CD4-positive, alpha-beta T cell (primary cell): ENCODE measurements at regions of chr22 and their contacts with region 1.

Region 1: DNA sequence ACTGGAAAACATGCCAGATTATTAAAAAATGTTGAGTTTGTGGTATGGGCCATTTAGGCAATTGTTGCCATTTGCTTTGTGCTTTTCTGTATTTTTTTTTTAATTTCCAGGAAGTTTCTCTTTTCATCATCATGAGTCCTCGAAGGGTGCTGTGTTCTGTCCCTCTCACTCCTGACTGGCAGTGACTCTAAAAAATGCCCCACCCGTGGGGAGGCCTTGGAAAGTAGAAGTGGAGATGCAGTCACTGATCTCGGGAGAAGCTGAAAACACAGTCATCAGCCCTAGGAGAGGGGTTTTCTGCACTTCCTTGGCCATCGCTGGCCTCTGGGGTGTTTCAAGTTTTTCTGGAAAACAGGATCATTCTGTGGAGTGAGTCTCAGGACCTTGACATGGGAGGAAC is 98.5 kb upstream of the GRK3 start:
- DNase-seq: no peak
- ATAC-seq: no peak
- H3K4me3 ChIP-seq: no peak overlapping the region
- H3K4me3 Mint-ChIP-seq: no peak overlapping the region
- H3K27ac ChIP-seq: no peak overlapping the region
- H3K27ac Mint-ChIP-seq: no peak overlapping the region
- H3K4me1 ChIP-seq: peaks cover 5% of the 10 kb centered on the region
- H3K4me1 Mint-ChIP-seq: peaks cover 5% of the 10 kb centered on the region
- H3K27me3 ChIP-seq: no peaks in the 10 kb centered on the region
- H3K27me3 Mint-ChIP-seq: no peaks in the 10 kb centered on the region
- CTCF ChIP-seq: no peak

Region 2: DNA sequence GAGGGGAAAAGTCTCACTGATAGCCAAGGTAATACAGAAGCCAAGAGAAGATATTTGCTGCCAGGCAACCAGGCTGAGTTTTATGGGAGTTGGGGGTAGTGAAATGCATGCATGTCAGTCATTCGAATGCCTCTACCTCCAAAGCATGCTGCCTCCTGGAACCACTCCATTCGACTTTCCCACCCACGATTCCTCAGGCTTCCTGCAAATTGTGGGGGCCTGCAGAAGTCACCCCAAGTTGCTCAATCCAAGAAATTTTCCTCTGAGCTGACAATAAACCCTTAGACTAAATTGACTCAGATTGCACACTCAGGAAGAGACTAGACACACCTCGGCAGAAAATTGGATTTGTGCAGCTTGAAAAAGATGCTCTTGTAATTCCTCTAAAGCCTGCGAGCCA is 24.9 kb after region 1 on chr22:
- CTCF ChIA-PET with region 1: no interaction called
- POLR2A ChIA-PET with region 1: no interaction called
- intact Hi-C with region 1: no loop called
- DNase-seq: no peak
- ATAC-seq: no peak
- H3K4me3 ChIP-seq: no peak overlapping the region
- H3K4me3 Mint-ChIP-seq: no peak overlapping the region
- H3K27ac ChIP-seq: no peak overlapping the region
- H3K27ac Mint-ChIP-seq: no peak overlapping the region
- H3K4me1 ChIP-seq: no peaks in the 10 kb centered on the region
- H3K4me1 Mint-ChIP-seq: no peaks in the 10 kb centered on the region
- H3K27me3 ChIP-seq: no peaks in the 10 kb centered on the region
- H3K27me3 Mint-ChIP-seq: peaks cover 17% of the 10 kb centered on the region
- CTCF ChIP-seq: no peak

Region 3: GRCh38 chr22:25656724-25657123 is 190.8 kb after region 1 on chr22:
- CTCF ChIA-PET with region 1: no interaction called
- POLR2A ChIA-PET with region 1: no interaction called
- intact Hi-C with region 1: no loop called
- DNase-seq: no peak
- ATAC-seq: no peak
- H3K4me3 ChIP-seq: no peak overlapping the region
- H3K4me3 Mint-ChIP-seq: no peak overlapping the region
- H3K27ac ChIP-seq: no peak overlapping the region
- H3K27ac Mint-ChIP-seq: no peak overlapping the region
- H3K4me1 ChIP-seq: no peaks in the 10 kb centered on the region
- H3K4me1 Mint-ChIP-seq: no peaks in the 10 kb centered on the region
- H3K27me3 ChIP-seq: no peaks in the 10 kb centered on the region
- H3K27me3 Mint-ChIP-seq: no peaks in the 10 kb centered on the region
- CTCF ChIP-seq: no peak

Region 4: GRCh38 chr22:25702040-25702439 is 236.1 kb after region 1 on chr22:
- CTCF ChIA-PET with region 1: no interaction called
- POLR2A ChIA-PET with region 1: no interaction called
- intact Hi-C with region 1: loop called (anchors 2 kb)
- DNase-seq: peak in 2 of 14 experiments; percentile 10 to 14
- ATAC-seq: no peak
- H3K4me3 ChIP-seq: no peak overlapping the region
- H3K4me3 Mint-ChIP-seq: no peak overlapping the region
- H3K27ac ChIP-seq: no peak overlapping the region
- H3K27ac Mint-ChIP-seq: no peak overlapping the region
- H3K4me1 ChIP-seq: no peaks in the 10 kb centered on the region
- H3K4me1 Mint-ChIP-seq: no peaks in the 10 kb centered on the region
- H3K27me3 ChIP-seq: no peaks in the 10 kb centered on the region
- H3K27me3 Mint-ChIP-seq: no peaks in the 10 kb centered on the region
- CTCF ChIP-seq: no peak

Region 5: DNA sequence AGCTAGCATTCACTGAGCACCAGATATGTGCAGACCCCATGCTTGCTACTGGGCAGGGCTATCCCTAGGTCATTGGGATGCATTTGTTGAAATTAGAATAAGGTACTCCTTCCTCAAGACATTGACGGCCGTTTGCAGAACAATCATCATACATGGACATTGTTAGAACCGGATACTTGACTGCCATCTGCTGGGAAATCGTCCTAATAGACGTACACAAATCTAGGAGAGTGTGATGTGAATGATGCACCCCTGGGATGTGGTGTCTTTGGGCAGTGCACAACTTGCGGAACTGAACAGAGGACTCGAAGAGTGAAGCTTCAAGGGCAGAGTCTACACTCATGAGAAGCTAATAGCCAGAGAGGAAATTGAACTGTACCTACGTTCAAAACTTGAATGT is 311.9 kb after region 1 on chr22:
- CTCF ChIA-PET with region 1: interaction called, 7 read pairs
- POLR2A ChIA-PET with region 1: no interaction called
- intact Hi-C with region 1: loop called (anchors 1 kb)
- DNase-seq: no peak
- ATAC-seq: no peak
- H3K4me3 ChIP-seq: no peak overlapping the region
- H3K4me3 Mint-ChIP-seq: no peak overlapping the region
- H3K27ac ChIP-seq: no peak overlapping the region
- H3K27ac Mint-ChIP-seq: no peak overlapping the region
- H3K4me1 ChIP-seq: peaks cover 3% of the 10 kb centered on the region
- H3K4me1 Mint-ChIP-seq: peaks cover 1% of the 10 kb centered on the region
- H3K27me3 ChIP-seq: no peaks in the 10 kb centered on the region
- H3K27me3 Mint-ChIP-seq: peaks cover 4% of the 10 kb centered on the region
- CTCF ChIP-seq: no peak

Region 6: GRCh38 chr22:26364066-26365015 is 898.4 kb after region 1 on chr22:
- CTCF ChIA-PET with region 1: no interaction called
- POLR2A ChIA-PET with region 1: no interaction called
- intact Hi-C with region 1: loop called (anchors 1 kb)
- DNase-seq: peak; percentile 18 to 80 (median 34)
- ATAC-seq: peak; percentile 81
- H3K4me3 ChIP-seq: no peak overlapping the region
- H3K4me3 Mint-ChIP-seq: no peak overlapping the region
- H3K27ac ChIP-seq: no peak overlapping the region
- H3K27ac Mint-ChIP-seq: no peak overlapping the region
- H3K4me1 ChIP-seq: peaks cover 8% of the 10 kb centered on the region
- H3K4me1 Mint-ChIP-seq: peaks cover 6% of the 10 kb centered on the region
- H3K27me3 ChIP-seq: peaks cover 0 to 11% of the 10 kb centered on the region in 2 experiments
- H3K27me3 Mint-ChIP-seq: peaks cover 31% of the 10 kb centered on the region
- CTCF ChIP-seq: peak; percentile 60